ENCODE measurements at regions of chr5 and their contacts with region 1.

Region 1: DNA sequence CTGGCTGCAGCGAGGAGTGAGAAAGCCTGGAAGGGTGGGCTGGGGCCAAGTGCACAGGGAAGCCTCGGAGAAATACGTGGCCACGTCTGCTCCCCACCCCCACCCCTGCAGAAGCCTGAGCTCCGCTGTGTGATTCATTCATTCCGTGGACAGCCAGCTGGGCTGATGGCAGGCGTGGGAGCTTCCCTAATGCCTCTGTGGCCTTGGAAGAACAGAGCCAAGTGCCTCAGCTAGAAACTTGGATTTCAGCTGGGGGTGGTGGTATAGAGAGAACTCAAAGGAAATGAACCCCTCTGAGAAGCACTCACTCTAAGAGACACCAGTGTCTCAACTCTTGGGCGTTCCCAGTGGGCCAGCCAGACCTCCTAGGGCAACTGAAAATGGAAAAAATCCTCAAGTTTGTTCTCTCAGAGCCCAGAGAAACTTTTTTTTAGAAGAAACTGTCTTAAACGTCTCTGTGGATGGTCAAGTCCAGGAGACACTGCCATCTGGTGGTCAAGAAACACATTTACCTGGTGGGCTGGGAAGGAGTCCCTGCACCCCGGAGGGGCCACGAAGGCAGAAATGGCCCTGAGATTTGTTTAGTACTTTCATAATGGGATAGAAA is 18.0 kb downstream of the ATOX1 start:
- DNase-seq: peak; percentile 35 to 81
- ATAC-seq: peak; percentile 41 to 62 (median 48)
- H3K4me3 ChIP-seq: no peak overlapping the region
- H3K4me3 Mint-ChIP-seq: no peak overlapping the region
- H3K27ac ChIP-seq: no peak overlapping the region
- H3K27ac Mint-ChIP-seq: peak overlapping the region in 1 of 2 donors; percentile 9
- H3K4me1 ChIP-seq: peaks cover 19% of the 10 kb centered on the region
- H3K4me1 Mint-ChIP-seq: peaks cover 48 to 50% of the 10 kb centered on the region in 2 donors
- H3K27me3 ChIP-seq: no peaks in the 10 kb centered on the region
- H3K27me3 Mint-ChIP-seq: no peaks in the 10 kb centered on the region
- CTCF ChIP-seq: peak; percentile 88

Region 2: DNA sequence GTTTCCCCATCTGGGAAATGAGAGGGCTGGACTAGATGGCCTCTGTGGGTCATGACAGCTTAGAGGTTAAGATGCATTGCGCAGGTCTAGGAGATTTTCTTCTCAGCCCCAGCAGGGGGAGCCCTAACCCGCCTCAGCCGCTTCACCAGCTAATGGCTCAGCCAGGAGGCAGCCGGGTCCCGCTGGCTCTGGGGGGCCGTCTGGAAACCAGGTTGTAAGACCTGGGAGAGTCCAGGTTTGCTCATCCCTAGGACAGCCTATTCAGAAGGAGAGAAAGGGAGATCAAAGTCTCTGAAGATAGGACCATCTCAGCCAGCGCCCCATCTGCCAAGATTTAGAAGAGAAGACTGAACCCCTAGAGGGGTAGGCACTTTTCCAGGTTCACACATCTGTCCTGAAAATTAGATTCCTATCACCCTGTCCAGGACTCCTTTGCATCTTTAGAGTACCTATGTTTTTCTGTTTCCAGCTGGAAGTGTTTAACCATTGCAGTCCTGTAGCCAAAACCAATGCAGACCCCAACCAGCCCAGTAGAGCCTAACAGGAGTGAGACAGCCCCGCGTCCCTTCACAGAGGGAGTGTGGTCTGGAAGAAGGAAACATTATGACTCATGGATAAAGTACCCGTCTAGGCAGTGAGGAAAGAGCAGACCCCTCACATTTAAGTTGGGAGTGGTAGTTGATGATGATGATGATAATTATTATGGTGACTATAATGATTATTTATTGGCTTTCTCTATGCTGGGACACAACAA is 81.3 kb before region 1 on chr5:
- intact Hi-C with region 1: loop called (anchors 1 kb)
- DNase-seq: peak; percentile 81 to 89
- ATAC-seq: peak; percentile 92 to 100 (median 100)
- H3K4me3 ChIP-seq: no peak overlapping the region
- H3K4me3 Mint-ChIP-seq: no peak overlapping the region
- H3K27ac ChIP-seq: no peak overlapping the region
- H3K27ac Mint-ChIP-seq: no peak overlapping the region
- H3K4me1 ChIP-seq: peaks cover 11% of the 10 kb centered on the region
- H3K4me1 Mint-ChIP-seq: peaks cover 11 to 16% of the 10 kb centered on the region in 2 donors
- H3K27me3 ChIP-seq: peaks cover 3% of the 10 kb centered on the region
- H3K27me3 Mint-ChIP-seq: peaks cover 0 to 6% of the 10 kb centered on the region in 2 donors
- CTCF ChIP-seq: peak; percentile 85

Region 3: GRCh38 chr5:151719228-151720000 is 21.0 kb before region 1 on chr5:
- intact Hi-C with region 1: no loop called
- DNase-seq: peak in 1 of 2 donors; percentile 13
- ATAC-seq: peak in 1 of 3 donors; percentile 39
- H3K4me3 ChIP-seq: no peak overlapping the region
- H3K4me3 Mint-ChIP-seq: no peak overlapping the region
- H3K27ac ChIP-seq: no peak overlapping the region
- H3K27ac Mint-ChIP-seq: no peak overlapping the region
- H3K4me1 ChIP-seq: no peaks in the 10 kb centered on the region
- H3K4me1 Mint-ChIP-seq: peaks cover 0 to 5% of the 10 kb centered on the region in 2 donors
- H3K27me3 ChIP-seq: no peaks in the 10 kb centered on the region
- H3K27me3 Mint-ChIP-seq: no peaks in the 10 kb centered on the region
- CTCF ChIP-seq: peak; percentile 15

Region 4: GRCh38 chr5:151758430-151759241 is 18.2 kb after region 1 on chr5 and contains the start of gene ATOX1:
- intact Hi-C with region 1: loop called (anchors 1 kb)
- DNase-seq: peak; percentile 92 to 95
- ATAC-seq: peak; percentile 98 to 100 (median 99)
- H3K4me3 ChIP-seq: peak within 1 kb of the TSS; percentile 70
- H3K4me3 Mint-ChIP-seq: peak within 1 kb of the TSS; percentile 93
- H3K27ac ChIP-seq: peak within 1 kb of the TSS; percentile 58
- H3K27ac Mint-ChIP-seq: peak within 1 kb of the TSS; percentile 89 to 97
- H3K4me1 ChIP-seq: peaks cover 30% of the 10 kb centered on the region
- H3K4me1 Mint-ChIP-seq: peaks cover 34 to 35% of the 10 kb centered on the region in 2 donors
- H3K27me3 ChIP-seq: no peaks in the 10 kb centered on the region
- H3K27me3 Mint-ChIP-seq: no peaks in the 10 kb centered on the region
- CTCF ChIP-seq: peak; percentile 5
- total RNA-seq, gene ATOX1: 41.5 to 46.4 (median 46.2) TPM

Region 5: DNA sequence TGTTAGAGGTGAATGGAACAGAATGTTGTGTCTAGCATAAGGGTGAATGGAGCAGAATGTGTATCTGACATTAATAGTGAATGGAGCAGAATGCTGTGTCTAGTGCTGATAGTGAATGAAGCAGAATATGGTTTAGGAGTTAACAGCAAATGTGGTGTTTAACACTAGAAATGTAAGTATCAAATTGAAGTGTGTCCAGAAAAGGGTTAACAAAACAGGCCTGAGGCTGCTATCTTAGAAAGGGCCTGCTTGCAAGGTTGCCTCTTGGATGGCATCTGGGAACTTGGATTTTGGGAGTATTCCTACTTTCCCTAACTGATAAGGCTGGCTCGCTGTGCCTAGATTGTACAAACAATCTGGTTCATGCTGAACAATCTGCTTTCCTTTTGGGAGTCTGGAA is 107.4 kb after region 1 on chr5:
- intact Hi-C with region 1: no loop called
- DNase-seq: no peak
- ATAC-seq: no peak
- H3K4me3 ChIP-seq: no peak overlapping the region
- H3K4me3 Mint-ChIP-seq: no peak overlapping the region
- H3K27ac ChIP-seq: no peak overlapping the region
- H3K27ac Mint-ChIP-seq: no peak overlapping the region
- H3K4me1 ChIP-seq: no peaks in the 10 kb centered on the region
- H3K4me1 Mint-ChIP-seq: no peaks in the 10 kb centered on the region
- H3K27me3 ChIP-seq: no peaks in the 10 kb centered on the region
- H3K27me3 Mint-ChIP-seq: peaks cover 0 to 2% of the 10 kb centered on the region in 2 donors
- CTCF ChIP-seq: no peak